Breast epithelium (tissue), 4 donors: ENCODE measurements at regions of chr11 and their contacts with region 1.

Region 1: GRCh38 chr11:107385361-107385982 is 72.2 kb downstream of the CWF19L2 start:
- DNase-seq: no peak
- H3K4me3 ChIP-seq: no peak overlapping the region
- H3K27ac ChIP-seq: no peak overlapping the region
- H3K4me1 ChIP-seq: no peaks in the 10 kb centered on the region
- H3K27me3 ChIP-seq: no peaks in the 10 kb centered on the region
- CTCF ChIP-seq: no peak
- POLR2A ChIP-seq: no peak

Region 2: GRCh38 chr11:108008656-108009496 is 623.4 kb after region 1 on chr11 and contains the start of gene CUL5:
- intact Hi-C with region 1: loop called (anchors 10 kb)
- DNase-seq: peak; percentile 82 to 90
- H3K4me3 ChIP-seq: peak within 1 kb of the TSS; percentile 74 to 96 (median 93)
- H3K27ac ChIP-seq: peak within 1 kb of the TSS; percentile 98 to 99
- H3K4me1 ChIP-seq: peaks cover 3 to 13% of the 10 kb centered on the region in 2 donors
- H3K27me3 ChIP-seq: no peaks in the 10 kb centered on the region
- CTCF ChIP-seq: peak; percentile 60 to 91 (median 82)
- POLR2A ChIP-seq: peak; percentile 38
- total RNA-seq, gene CUL5: 25.9 to 34.4 (median 32.8) TPM